ENCODE measurements at regions of chr11 and their contacts with region 1.

Region 1: GRCh38 chr11:68459886-68460740 is 439 bp upstream of the PPP6R3 start:
- DNase-seq: peak; percentile 89 to 99 (median 94)
- ATAC-seq: peak; percentile 90
- H3K4me3 ChIP-seq: peak overlapping the region; percentile 92
- H3K4me3 Mint-ChIP-seq: peak overlapping the region; percentile 100
- H3K27ac ChIP-seq: peak overlapping the region; percentile 95 to 99
- H3K27ac Mint-ChIP-seq: peak overlapping the region; percentile 100
- H3K4me1 ChIP-seq: peaks cover 40% of the 10 kb centered on the region
- H3K4me1 Mint-ChIP-seq: peaks cover 39% of the 10 kb centered on the region
- H3K27me3 ChIP-seq: no peaks in the 10 kb centered on the region
- H3K27me3 Mint-ChIP-seq: peaks cover 8% of the 10 kb centered on the region
- CTCF ChIP-seq: no peak

Region 2: GRCh38 chr11:68038718-68039525 is 421.2 kb before region 1 on chr11 and contains the start of gene TCIRG1:
- CTCF ChIA-PET with region 1: no interaction called
- POLR2A ChIA-PET with region 1: no interaction called
- intact Hi-C with region 1: loop called in 1 of 2 experiments (anchors 5 kb)
- DNase-seq: peak in 12 of 14 experiments; percentile 12 to 79 (median 56)
- ATAC-seq: peak; percentile 55
- H3K4me3 ChIP-seq: peak within 1 kb of the TSS; percentile 96
- H3K4me3 Mint-ChIP-seq: peak within 1 kb of the TSS; percentile 89
- H3K27ac ChIP-seq: peak within 1 kb of the TSS; percentile 77 to 82
- H3K27ac Mint-ChIP-seq: peak within 1 kb of the TSS; percentile 92
- H3K4me1 ChIP-seq: peaks cover 66% of the 10 kb centered on the region
- H3K4me1 Mint-ChIP-seq: peaks cover 29% of the 10 kb centered on the region
- H3K27me3 ChIP-seq: no peaks in the 10 kb centered on the region
- H3K27me3 Mint-ChIP-seq: no peaks in the 10 kb centered on the region
- CTCF ChIP-seq: no peak
- total RNA-seq, gene TCIRG1: 202 to 207 TPM

Region 3: GRCh38 chr11:68213555-68214174 is 246.4 kb before region 1 on chr11:
- CTCF ChIA-PET with region 1: no interaction called
- POLR2A ChIA-PET with region 1: no interaction called
- intact Hi-C with region 1: loop called in 1 of 2 experiments (anchors 5 kb)
- DNase-seq: peak; percentile 60 to 95 (median 80)
- ATAC-seq: peak; percentile 32
- H3K4me3 ChIP-seq: peak overlapping the region; percentile 78
- H3K4me3 Mint-ChIP-seq: peak overlapping the region; percentile 73
- H3K27ac ChIP-seq: peak overlapping the region in 1 of 2 donors; percentile 74
- H3K27ac Mint-ChIP-seq: peak overlapping the region; percentile 77
- H3K4me1 ChIP-seq: peaks cover 41% of the 10 kb centered on the region
- H3K4me1 Mint-ChIP-seq: peaks cover 51% of the 10 kb centered on the region
- H3K27me3 ChIP-seq: no peaks in the 10 kb centered on the region
- H3K27me3 Mint-ChIP-seq: peaks cover 13% of the 10 kb centered on the region
- CTCF ChIP-seq: no peak

Region 4: GRCh38 chr11:68370211-68371111 is 89.7 kb before region 1 on chr11:
- CTCF ChIA-PET with region 1: no interaction called
- POLR2A ChIA-PET with region 1: no interaction called
- intact Hi-C with region 1: no loop called
- DNase-seq: peak in 3 of 14 experiments; percentile 3 to 51 (median 37)
- ATAC-seq: no peak
- H3K4me3 ChIP-seq: no peak overlapping the region
- H3K4me3 Mint-ChIP-seq: no peak overlapping the region
- H3K27ac ChIP-seq: no peak overlapping the region
- H3K27ac Mint-ChIP-seq: no peak overlapping the region
- H3K4me1 ChIP-seq: no peaks in the 10 kb centered on the region
- H3K4me1 Mint-ChIP-seq: no peaks in the 10 kb centered on the region
- H3K27me3 ChIP-seq: peaks cover 0 to 2% of the 10 kb centered on the region in 2 experiments
- H3K27me3 Mint-ChIP-seq: no peaks in the 10 kb centered on the region
- CTCF ChIP-seq: no peak

Region 5: DNA sequence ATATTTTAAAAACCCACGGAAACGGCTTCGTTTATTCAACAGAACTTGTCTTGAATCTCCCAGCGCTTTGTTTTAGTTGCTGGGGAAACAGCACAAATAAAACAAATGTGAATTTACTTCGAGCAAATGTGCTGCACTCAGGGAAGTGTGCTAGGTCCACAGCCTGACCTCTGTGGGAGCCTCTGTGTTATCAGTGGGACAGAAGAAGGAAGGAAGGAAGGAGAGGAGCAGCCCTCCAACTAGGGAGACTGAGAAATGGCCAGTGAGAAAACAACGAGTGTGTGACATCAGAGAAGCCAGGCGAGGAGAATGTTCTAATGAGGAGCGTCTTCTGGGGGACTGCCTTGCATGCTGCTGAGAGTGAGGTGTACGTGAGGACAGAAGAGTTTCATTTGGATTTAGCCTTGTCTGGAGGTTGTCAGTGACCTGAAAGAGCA is 43.2 kb after region 1 on chr11:
- CTCF ChIA-PET with region 1: no interaction called
- POLR2A ChIA-PET with region 1: interaction called, 3 read pairs
- intact Hi-C with region 1: loop called in 1 of 2 experiments (anchors 5 kb)
- DNase-seq: no peak
- ATAC-seq: no peak
- H3K4me3 ChIP-seq: no peak overlapping the region
- H3K4me3 Mint-ChIP-seq: no peak overlapping the region
- H3K27ac ChIP-seq: no peak overlapping the region
- H3K27ac Mint-ChIP-seq: peak overlapping the region; percentile 7
- H3K4me1 ChIP-seq: peaks cover 48% of the 10 kb centered on the region
- H3K4me1 Mint-ChIP-seq: peaks cover 95% of the 10 kb centered on the region
- H3K27me3 ChIP-seq: no peaks in the 10 kb centered on the region
- H3K27me3 Mint-ChIP-seq: no peaks in the 10 kb centered on the region
- CTCF ChIP-seq: no peak

Region 6: GRCh38 chr11:68528630-68529029 is 68.5 kb after region 1 on chr11:
- CTCF ChIA-PET with region 1: no interaction called
- POLR2A ChIA-PET with region 1: interaction called, 5 read pairs
- intact Hi-C with region 1: loop called in 1 of 2 experiments (anchors 5 kb)
- DNase-seq: peak in 6 of 14 experiments; percentile 10 to 59 (median 32)
- ATAC-seq: peak; percentile 87
- H3K4me3 ChIP-seq: no peak overlapping the region
- H3K4me3 Mint-ChIP-seq: peak overlapping the region; percentile 21
- H3K27ac ChIP-seq: no peak overlapping the region
- H3K27ac Mint-ChIP-seq: peak overlapping the region; percentile 72
- H3K4me1 ChIP-seq: peaks cover 31% of the 10 kb centered on the region
- H3K4me1 Mint-ChIP-seq: peaks cover 90% of the 10 kb centered on the region
- H3K27me3 ChIP-seq: no peaks in the 10 kb centered on the region
- H3K27me3 Mint-ChIP-seq: no peaks in the 10 kb centered on the region
- CTCF ChIP-seq: no peak

Region 7: DNA sequence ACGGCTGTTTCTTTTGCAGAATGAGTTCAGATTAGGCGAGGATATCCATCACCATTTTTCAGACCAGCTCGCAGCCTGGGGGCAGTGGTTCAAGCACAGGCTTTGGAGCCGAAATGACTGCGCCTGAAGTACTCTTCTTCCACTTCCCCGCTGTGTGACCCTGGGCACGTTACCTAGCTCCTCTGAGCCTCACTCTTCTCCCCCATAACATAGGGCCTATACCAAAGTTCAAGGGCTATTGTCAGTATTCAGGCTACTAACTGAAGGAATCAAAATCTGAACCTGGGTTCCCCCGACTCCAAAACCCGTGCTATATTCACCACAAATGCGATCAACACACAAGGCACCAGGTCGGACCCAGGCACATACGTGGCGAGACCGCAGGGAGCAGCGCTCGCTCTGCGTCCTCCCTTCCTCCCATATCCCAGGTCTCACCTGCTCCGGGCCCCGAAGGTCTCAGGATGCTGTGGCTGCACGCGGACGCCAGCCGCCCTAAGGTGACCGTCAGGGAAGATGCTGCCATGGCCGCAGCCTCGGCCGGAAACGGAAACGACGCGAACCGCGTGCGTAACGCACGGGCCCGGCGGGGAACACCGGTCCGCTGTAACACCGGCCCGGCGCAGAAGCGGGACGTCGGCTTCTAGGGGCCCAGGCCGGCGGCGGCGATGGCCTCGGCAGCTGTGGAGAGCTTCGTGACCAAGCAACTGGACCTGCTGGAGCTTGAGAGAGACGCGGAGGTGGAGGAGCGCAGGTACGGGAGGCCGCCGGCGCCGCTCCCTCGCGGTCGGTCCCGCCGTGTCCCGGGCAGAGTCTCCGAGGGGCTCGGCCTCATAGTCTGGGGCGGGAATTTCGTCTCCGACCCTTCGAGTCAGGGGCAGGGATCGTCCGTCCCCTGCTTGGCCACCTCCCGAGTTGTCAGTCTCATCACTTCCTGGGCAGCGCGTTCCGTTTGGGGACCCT is 443.5 kb after region 1 on chr11 and contains the starts of genes IGHMBP2 and MRPL21:
- CTCF ChIA-PET with region 1: no interaction called
- POLR2A ChIA-PET with region 1: interaction called, 3 read pairs
- intact Hi-C with region 1: loop called in 1 of 2 experiments (anchors 10 kb)
- DNase-seq: peak; percentile 71 to 93 (median 82)
- ATAC-seq: peak; percentile 92
- H3K4me3 ChIP-seq: peak within 1 kb of the TSS; percentile 95
- H3K4me3 Mint-ChIP-seq: peak within 1 kb of the TSS; percentile 98
- H3K27ac ChIP-seq: peak within 1 kb of the TSS; percentile 57 to 67
- H3K27ac Mint-ChIP-seq: peak within 1 kb of the TSS; percentile 92
- H3K4me1 ChIP-seq: peaks cover 31% of the 10 kb centered on the region
- H3K4me1 Mint-ChIP-seq: peaks cover 50% of the 10 kb centered on the region
- H3K27me3 ChIP-seq: no peaks in the 10 kb centered on the region
- H3K27me3 Mint-ChIP-seq: no peaks in the 10 kb centered on the region
- CTCF ChIP-seq: no peak
- total RNA-seq, gene IGHMBP2: 17.5 to 18.5 TPM
- total RNA-seq, gene MRPL21: 47.5 to 48.0 TPM